ENCODE measurements at regions of chr1 and their contacts with region 1.

Region 1: GRCh38 chr1:84690397-84691121 is at the start of gene SSX2IP:
- DNase-seq: peak; percentile 98
- H3K4me3 Mint-ChIP-seq: peak within 1 kb of the TSS; percentile 94
- H3K27ac Mint-ChIP-seq: peak within 1 kb of the TSS; percentile 95
- H3K4me1 Mint-ChIP-seq: peaks cover 59% of the 10 kb centered on the region
- H3K27me3 Mint-ChIP-seq: no peaks in the 10 kb centered on the region
- total RNA-seq, gene SSX2IP: 11.1 and 15.0 TPM in 2 replicates

Region 2: GRCh38 chr1:83998498-83999315 is 691.9 kb before region 1 on chr1 and contains the start of gene TTLL7:
- intact Hi-C with region 1: loop called (anchors 5 kb)
- DNase-seq: peak; percentile 62
- H3K4me3 Mint-ChIP-seq: peak within 1 kb of the TSS; percentile 89
- H3K27ac Mint-ChIP-seq: peak within 1 kb of the TSS; percentile 56
- H3K4me1 Mint-ChIP-seq: peaks cover 24% of the 10 kb centered on the region
- H3K27me3 Mint-ChIP-seq: peaks cover 60% of the 10 kb centered on the region
- total RNA-seq, gene TTLL7: 0.15 and 0.29 TPM in 2 replicates

Region 3: DNA sequence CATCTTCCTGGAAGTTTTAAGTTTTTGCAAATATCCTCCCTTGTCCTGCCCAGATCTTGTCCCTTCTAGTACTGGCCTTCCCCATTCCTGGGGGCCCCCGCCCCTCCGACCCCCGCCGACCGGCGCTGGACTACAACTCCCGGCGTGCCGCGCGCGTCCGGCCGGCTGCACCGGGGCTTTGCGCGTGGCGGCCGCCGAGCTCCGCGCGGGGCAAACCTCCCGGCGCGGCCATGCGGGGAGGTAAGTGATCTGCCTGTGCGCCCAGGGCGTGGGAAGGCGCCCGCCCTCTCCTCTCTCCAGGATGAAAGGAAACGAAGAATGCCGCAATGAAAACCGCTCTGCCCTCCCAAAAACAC is 392.3 kb before region 1 on chr1:
- intact Hi-C with region 1: loop called (anchors 5 kb)
- DNase-seq: peak; percentile 46
- H3K4me3 Mint-ChIP-seq: peak overlapping the region; percentile 86
- H3K27ac Mint-ChIP-seq: peak overlapping the region; percentile 68
- H3K4me1 Mint-ChIP-seq: peaks cover 39% of the 10 kb centered on the region
- H3K27me3 Mint-ChIP-seq: peaks cover 5% of the 10 kb centered on the region

Region 4: DNA sequence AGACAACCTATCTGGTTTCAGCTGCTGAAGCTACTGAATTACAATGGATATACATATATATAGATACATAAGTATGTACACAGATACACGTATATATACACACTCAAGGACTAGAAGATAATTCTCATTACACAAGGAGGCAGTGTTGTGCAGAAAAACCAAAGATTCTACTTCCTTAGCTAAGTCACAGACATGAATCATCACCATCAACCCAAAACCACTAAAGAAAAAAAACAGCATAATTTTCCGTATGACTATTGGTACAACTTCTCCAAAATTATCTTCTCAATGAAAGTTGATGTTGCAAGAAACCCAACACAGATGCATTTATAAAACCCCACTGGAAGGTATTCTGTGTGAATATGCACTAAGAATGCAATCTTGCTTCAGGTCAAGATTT is 248.3 kb before region 1 on chr1:
- intact Hi-C with region 1: loop called (anchors 1 kb)
- DNase-seq: peak; percentile 13
- H3K4me3 Mint-ChIP-seq: no peak overlapping the region
- H3K27ac Mint-ChIP-seq: peak overlapping the region; percentile 73
- H3K4me1 Mint-ChIP-seq: peaks cover 23% of the 10 kb centered on the region
- H3K27me3 Mint-ChIP-seq: peaks cover 8% of the 10 kb centered on the region

Region 5: DNA sequence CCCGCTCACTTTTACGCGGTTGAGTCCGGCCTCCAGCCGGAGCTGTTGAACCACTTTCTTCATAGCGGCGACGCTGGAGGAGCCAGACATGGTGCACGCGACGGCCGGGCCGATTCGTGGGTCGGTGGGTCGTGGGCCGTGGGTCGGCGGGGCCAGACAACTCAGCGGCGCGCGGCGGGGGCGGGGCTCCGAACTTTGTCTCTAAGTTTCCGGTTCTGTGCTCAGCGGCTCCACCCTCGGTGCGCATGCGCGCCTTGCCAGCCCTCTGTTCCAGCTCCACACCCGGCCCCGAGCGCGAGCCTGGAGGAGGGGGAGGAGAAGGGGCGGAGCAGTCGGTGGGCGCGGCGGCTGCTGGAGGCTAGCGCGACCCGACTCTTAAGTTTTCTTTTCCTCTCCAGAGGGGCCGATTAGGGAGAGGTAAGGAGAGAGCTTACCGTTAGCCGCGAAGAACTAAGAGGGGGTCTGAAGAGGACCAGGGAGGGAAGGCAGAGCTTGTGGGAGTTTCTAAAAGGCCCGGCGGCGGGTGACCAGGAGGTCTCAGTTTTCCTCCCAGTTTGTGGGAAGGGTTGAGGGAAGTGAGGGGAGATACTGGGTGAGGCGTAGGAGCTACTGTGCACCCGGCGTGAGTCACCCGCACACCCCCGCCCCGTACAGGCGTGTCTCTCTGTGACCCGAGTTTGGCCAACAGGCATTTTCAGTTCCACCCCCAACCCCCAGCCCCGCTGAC is 184.4 kb before region 1 on chr1 and contains the starts of genes GNG5 and SPATA1:
- intact Hi-C with region 1: loop called (anchors 1 kb)
- DNase-seq: peak; percentile 96
- H3K4me3 Mint-ChIP-seq: peak within 1 kb of the TSS; percentile 98
- H3K27ac Mint-ChIP-seq: peak within 1 kb of the TSS; percentile 98
- H3K4me1 Mint-ChIP-seq: peaks cover 38% of the 10 kb centered on the region
- H3K27me3 Mint-ChIP-seq: no peaks in the 10 kb centered on the region
- total RNA-seq, gene GNG5: 107 and 110 TPM in 2 replicates
- total RNA-seq, gene SPATA1: 1.2 and 1.3 TPM in 2 replicates

Region 6: GRCh38 chr1:84753516-84754385 is 63.2 kb after region 1 on chr1:
- intact Hi-C with region 1: loop called (anchors 2 kb)
- DNase-seq: peak; percentile 57
- H3K4me3 Mint-ChIP-seq: no peak overlapping the region
- H3K27ac Mint-ChIP-seq: no peak overlapping the region
- H3K4me1 Mint-ChIP-seq: peaks cover 5% of the 10 kb centered on the region
- H3K27me3 Mint-ChIP-seq: peaks cover 26% of the 10 kb centered on the region

Region 7: GRCh38 chr1:85259118-85259911 is 568.8 kb after region 1 on chr1 and contains the start of gene C1orf52:
- intact Hi-C with region 1: loop called (anchors 2 kb)
- DNase-seq: peak; percentile 96
- H3K4me3 Mint-ChIP-seq: peak within 1 kb of the TSS; percentile 96
- H3K27ac Mint-ChIP-seq: peak within 1 kb of the TSS; percentile 90
- H3K4me1 Mint-ChIP-seq: peaks cover 40% of the 10 kb centered on the region
- H3K27me3 Mint-ChIP-seq: no peaks in the 10 kb centered on the region
- total RNA-seq, gene C1orf52: 30.9 and 31.6 TPM in 2 replicates